CD8-positive, alpha-beta memory T cell (primary cell): ENCODE measurements at regions of chr6 and their contacts with region 1.

Region 1: DNA sequence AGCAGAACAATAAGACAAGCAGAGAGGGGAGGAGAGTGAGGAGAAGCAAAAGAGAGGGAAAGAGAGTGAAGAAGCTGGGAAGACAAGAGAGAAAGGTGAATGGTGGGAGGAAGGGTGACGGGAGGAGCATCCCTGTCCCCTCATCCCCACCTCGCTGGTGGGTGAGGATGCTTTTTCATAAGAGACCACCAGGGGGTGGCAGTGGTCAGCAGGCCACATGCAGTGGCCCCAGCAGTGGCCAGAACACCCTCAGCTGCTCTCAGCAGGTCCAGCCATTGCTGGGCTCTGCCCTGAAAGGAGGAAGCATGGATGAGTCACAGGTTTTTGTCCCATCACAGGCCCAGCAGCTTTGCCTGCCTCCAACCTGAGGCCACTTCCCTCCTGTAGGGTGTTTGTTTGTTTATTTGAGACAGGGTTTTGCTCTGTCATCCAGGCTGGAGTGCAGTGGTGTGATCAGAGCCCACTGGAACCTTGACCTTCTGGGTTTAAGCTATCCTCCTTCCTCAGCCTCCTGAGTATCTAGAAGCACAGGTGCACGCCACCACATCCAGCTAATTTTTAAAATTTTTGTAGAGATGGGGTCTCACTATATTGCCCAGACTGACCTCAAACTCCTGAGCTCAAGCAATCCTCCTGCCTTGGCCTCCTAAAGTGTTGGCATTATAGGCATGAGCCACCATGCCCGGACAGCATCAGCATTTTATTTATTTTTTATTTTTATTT is 24.0 kb downstream of the FGD2 start:
- DNase-seq: peak in 4 of 5 donors; percentile 30 to 62 (median 42)
- H3K4me3 ChIP-seq: no peak overlapping the region
- H3K4me3 Mint-ChIP-seq: peak overlapping the region in 1 of 7 donors; percentile 1
- H3K27ac ChIP-seq: no peak overlapping the region
- H3K27ac Mint-ChIP-seq: peak overlapping the region in 6 of 8 donors; percentile 43 to 90 (median 70)
- H3K4me1 ChIP-seq: peaks cover 6% of the 10 kb centered on the region
- H3K4me1 Mint-ChIP-seq: peaks cover 23 to 33% (median 26%) of the 10 kb centered on the region in 3 donors
- H3K27me3 ChIP-seq: no peaks in the 10 kb centered on the region
- H3K27me3 Mint-ChIP-seq: no peaks in the 10 kb centered on the region

Region 2: DNA sequence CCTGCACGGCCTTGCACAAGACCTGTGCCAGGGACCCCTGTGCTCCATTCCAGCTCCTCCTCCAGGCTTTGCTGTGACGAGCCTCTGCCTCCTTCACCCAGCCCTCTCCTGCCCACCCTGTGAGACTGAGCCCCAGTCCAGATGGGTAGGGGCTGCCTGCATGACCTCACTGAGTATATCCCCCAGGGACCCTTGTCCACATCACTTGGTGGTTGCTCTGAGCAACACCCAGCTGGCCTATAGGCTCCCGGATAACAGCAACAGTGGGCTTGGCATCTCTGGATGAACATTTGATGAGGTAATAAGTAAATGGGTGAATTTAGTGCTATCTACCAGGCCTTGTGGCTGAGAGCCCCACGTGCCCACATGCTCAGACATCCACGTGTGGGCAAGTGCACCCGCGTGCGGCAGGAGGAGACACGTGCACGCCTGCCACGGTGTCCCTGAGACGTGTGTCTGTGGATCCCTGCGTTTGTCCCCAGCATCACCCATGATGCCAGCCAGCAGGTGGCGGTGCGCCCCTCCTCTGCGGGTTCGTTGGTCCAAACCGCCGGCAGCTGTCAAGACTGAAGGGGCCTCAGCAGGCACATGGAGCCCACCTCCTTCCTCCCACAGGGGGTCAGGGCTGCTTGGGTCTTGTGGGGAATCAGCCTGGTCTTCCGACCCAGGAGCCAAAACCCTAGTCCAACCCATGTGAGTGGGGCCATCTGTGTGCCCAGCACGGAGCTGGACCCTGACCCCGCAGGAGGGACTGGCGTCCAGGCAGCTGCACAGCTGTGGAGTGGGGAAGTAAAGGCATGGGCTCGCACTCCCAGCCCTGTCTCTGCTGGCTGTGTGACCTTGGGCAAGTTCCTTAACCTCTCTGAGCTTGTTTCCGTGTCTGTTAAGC is 22.0 kb after region 1 on chr6:
- CTCF ChIA-PET with region 1: interaction called, 152 read pairs
- POLR2A ChIA-PET with region 1: no interaction called
- DNase-seq: peak; percentile 80 to 90 (median 82)
- H3K4me3 ChIP-seq: peak overlapping the region; percentile 75
- H3K4me3 Mint-ChIP-seq: peak overlapping the region; percentile 64 to 95 (median 84)
- H3K27ac ChIP-seq: peak overlapping the region; percentile 91
- H3K27ac Mint-ChIP-seq: peak overlapping the region; percentile 80 to 100 (median 94)
- H3K4me1 ChIP-seq: peaks cover 60% of the 10 kb centered on the region
- H3K4me1 Mint-ChIP-seq: peaks cover 58 to 63% (median 61%) of the 10 kb centered on the region in 3 donors
- H3K27me3 ChIP-seq: no peaks in the 10 kb centered on the region
- H3K27me3 Mint-ChIP-seq: no peaks in the 10 kb centered on the region

Region 3: DNA sequence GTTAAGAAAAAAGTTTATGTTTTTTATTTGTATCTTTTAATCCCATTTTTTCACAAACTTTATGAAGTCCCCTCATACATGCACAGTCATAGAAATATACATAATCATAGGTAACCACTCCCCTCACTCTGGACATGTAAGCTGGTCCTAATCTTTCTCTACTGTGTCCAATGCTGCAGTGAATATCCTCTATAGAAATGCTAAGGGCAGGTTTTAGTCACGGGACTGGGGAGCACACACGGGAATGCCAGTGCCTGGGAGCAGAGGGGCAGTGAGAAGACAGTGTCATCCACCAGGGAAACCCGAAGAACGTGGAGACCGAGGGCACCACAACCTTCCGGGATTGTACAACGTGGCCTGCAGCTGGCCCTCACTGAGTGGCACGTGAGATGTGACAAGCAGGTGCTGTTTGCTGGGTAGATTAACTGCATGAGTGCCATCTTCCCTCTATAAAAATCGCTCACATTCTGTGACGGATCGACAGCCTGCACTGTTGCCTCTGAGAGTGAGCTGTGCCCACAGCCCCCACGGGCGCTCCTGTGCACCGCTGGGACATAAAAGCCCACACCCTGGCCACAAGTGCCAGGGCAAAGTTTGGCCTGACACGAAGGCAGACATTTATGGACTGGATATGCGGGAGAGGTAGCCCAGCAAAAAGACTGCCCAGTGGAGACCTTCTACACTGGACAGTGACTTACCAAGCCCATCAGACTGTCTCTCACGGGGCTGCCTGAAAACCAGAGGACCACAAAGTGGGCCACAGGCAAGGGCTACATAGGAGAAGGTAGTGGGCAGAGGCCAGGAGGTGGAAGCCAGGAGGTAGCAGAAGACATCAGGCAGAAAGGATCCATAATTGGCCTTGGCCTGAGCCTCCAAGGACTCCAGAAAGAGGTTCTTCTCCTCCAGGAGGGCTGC is 39.2 kb after region 1 on chr6:
- CTCF ChIA-PET with region 1: no interaction called
- POLR2A ChIA-PET with region 1: no interaction called
- DNase-seq: no peak
- H3K4me3 ChIP-seq: no peak overlapping the region
- H3K4me3 Mint-ChIP-seq: no peak overlapping the region
- H3K27ac ChIP-seq: no peak overlapping the region
- H3K27ac Mint-ChIP-seq: peak overlapping the region in 5 of 8 donors; percentile 1 to 76 (median 38)
- H3K4me1 ChIP-seq: peaks cover 13% of the 10 kb centered on the region
- H3K4me1 Mint-ChIP-seq: peaks cover 24 to 25% (median 24%) of the 10 kb centered on the region in 3 donors
- H3K27me3 ChIP-seq: no peaks in the 10 kb centered on the region
- H3K27me3 Mint-ChIP-seq: no peaks in the 10 kb centered on the region

Region 4: DNA sequence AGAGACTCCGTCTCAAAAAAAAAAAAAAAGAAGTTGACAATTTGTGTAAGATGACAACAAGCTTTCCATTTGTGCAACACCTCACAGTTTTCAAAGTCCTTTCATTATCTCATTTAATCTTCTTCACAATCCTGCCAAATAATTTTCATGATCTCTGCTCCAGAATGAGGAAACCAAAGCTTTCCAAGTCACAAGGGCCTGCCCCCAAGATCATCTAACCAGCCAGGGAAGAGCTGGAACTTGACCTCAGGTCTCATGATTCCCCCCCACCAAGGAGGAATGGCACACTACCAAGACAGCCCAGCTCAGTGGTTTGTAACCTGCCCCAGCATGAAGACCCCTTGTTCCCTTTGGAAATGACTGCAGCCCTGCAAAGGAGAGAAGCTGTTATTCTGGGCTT is 66.6 kb after region 1 on chr6:
- CTCF ChIA-PET with region 1: no interaction called
- POLR2A ChIA-PET with region 1: no interaction called
- DNase-seq: no peak
- H3K4me3 ChIP-seq: no peak overlapping the region
- H3K4me3 Mint-ChIP-seq: no peak overlapping the region
- H3K27ac ChIP-seq: no peak overlapping the region
- H3K27ac Mint-ChIP-seq: peak overlapping the region in 2 of 8 donors; percentile 70 to 72
- H3K4me1 ChIP-seq: no peaks in the 10 kb centered on the region
- H3K4me1 Mint-ChIP-seq: peaks cover 5 to 12% (median 8%) of the 10 kb centered on the region in 3 donors
- H3K27me3 ChIP-seq: no peaks in the 10 kb centered on the region
- H3K27me3 Mint-ChIP-seq: no peaks in the 10 kb centered on the region